ENCODE measurements at regions of chr18 and their contacts with region 1.

Region 1: GRCh38 chr18:77478646-77479442 is 229.2 kb downstream of the GALR1 start:
- DNase-seq: peak; percentile 53
- H3K4me3 Mint-ChIP-seq: peak overlapping the region; percentile 11
- H3K27ac Mint-ChIP-seq: peak overlapping the region; percentile 17
- H3K4me1 Mint-ChIP-seq: peaks cover 18% of the 10 kb centered on the region
- H3K27me3 Mint-ChIP-seq: no peaks in the 10 kb centered on the region
- CTCF ChIP-seq: peak; percentile 34

Region 2: DNA sequence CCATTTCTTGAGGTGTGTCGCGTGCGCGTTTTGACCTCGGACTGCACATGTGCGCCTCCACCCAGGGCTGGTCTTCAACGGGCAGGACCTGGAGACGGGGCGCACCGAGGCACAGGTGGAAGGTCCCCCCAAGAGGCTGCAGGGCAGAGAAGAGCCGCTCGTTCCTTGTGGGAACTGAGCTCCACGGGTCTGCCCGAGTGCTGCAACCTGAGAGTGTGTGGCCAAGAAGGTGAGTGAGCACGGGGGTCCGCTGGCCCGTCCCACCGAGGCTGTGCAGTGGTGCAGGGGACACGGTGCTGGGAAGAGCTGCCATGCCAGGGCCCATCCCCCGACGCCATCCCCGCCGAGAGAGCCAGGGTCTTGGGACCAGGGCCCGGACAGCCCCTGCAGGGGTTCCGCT is 39.1 kb after region 1 on chr18:
- CTCF ChIA-PET with region 1: no interaction called
- POLR2A ChIA-PET with region 1: no interaction called
- intact Hi-C with region 1: no loop called
- DNase-seq: no peak
- H3K4me3 Mint-ChIP-seq: no peak overlapping the region
- H3K27ac Mint-ChIP-seq: no peak overlapping the region
- H3K4me1 Mint-ChIP-seq: peaks cover 5% of the 10 kb centered on the region
- H3K27me3 Mint-ChIP-seq: no peaks in the 10 kb centered on the region
- CTCF ChIP-seq: no peak

Region 3: DNA sequence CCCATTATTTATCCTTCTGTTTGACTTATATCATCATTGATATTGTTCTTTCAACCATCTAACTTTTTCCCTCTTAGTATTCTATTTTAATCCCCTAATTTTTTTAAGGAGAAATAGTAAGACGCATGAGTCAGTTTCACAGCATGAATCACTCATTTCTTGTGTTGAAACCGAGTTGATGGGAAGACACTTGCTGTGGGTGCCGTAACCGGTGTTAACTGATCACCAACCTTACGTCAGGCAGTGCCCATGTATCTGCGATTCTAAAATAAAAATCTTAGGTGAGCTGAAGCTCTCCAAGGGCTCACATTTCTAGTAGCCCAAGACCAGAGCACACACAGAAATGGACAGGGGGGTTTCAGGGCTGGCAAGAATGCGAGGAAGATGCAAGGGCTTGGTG is 118.9 kb after region 1 on chr18:
- CTCF ChIA-PET with region 1: no interaction called
- POLR2A ChIA-PET with region 1: no interaction called
- intact Hi-C with region 1: loop called (anchors 10 kb)
- DNase-seq: peak; percentile 72
- H3K4me3 Mint-ChIP-seq: peak overlapping the region; percentile 55
- H3K27ac Mint-ChIP-seq: no peak overlapping the region
- H3K4me1 Mint-ChIP-seq: peaks cover 19% of the 10 kb centered on the region
- H3K27me3 Mint-ChIP-seq: no peaks in the 10 kb centered on the region
- CTCF ChIP-seq: no peak